ENCODE measurements at regions of chr7 and their contacts with region 1.

Region 1: GRCh38 chr7:112414855-112415490 is 35.3 kb upstream of the IFRD1 start:
- DNase-seq: peak in 1 of 2 donors; percentile 47
- ATAC-seq: no peak
- H3K4me3 ChIP-seq: no peak overlapping the region
- H3K4me3 Mint-ChIP-seq: no peak overlapping the region
- H3K27ac ChIP-seq: no peak overlapping the region
- H3K27ac Mint-ChIP-seq: no peak overlapping the region
- H3K4me1 ChIP-seq: no peaks in the 10 kb centered on the region
- H3K4me1 Mint-ChIP-seq: no peaks in the 10 kb centered on the region
- H3K27me3 ChIP-seq: no peaks in the 10 kb centered on the region
- H3K27me3 Mint-ChIP-seq: peaks cover 15 to 22% of the 10 kb centered on the region in 2 donors
- CTCF ChIP-seq: peak; percentile 21

Region 2: GRCh38 chr7:111763221-111763801 is 651.7 kb before region 1 on chr7:
- intact Hi-C with region 1: loop called (anchors 5 kb)
- DNase-seq: peak in 1 of 2 donors; percentile 9
- ATAC-seq: no peak
- H3K4me3 ChIP-seq: no peak overlapping the region
- H3K4me3 Mint-ChIP-seq: no peak overlapping the region
- H3K27ac ChIP-seq: no peak overlapping the region
- H3K27ac Mint-ChIP-seq: no peak overlapping the region
- H3K4me1 ChIP-seq: no peaks in the 10 kb centered on the region
- H3K4me1 Mint-ChIP-seq: no peaks in the 10 kb centered on the region
- H3K27me3 ChIP-seq: no peaks in the 10 kb centered on the region
- H3K27me3 Mint-ChIP-seq: no peaks in the 10 kb centered on the region
- CTCF ChIP-seq: no peak

Region 3: GRCh38 chr7:112476390-112477052 is 61.5 kb after region 1 on chr7:
- intact Hi-C with region 1: no loop called
- DNase-seq: no peak
- ATAC-seq: no peak
- H3K4me3 ChIP-seq: no peak overlapping the region
- H3K4me3 Mint-ChIP-seq: no peak overlapping the region
- H3K27ac ChIP-seq: no peak overlapping the region
- H3K27ac Mint-ChIP-seq: peak overlapping the region in 1 of 2 donors; percentile 54
- H3K4me1 ChIP-seq: no peaks in the 10 kb centered on the region
- H3K4me1 Mint-ChIP-seq: peaks cover 0 to 9% of the 10 kb centered on the region in 2 donors
- H3K27me3 ChIP-seq: no peaks in the 10 kb centered on the region
- H3K27me3 Mint-ChIP-seq: no peaks in the 10 kb centered on the region
- CTCF ChIP-seq: no peak

Region 4: DNA sequence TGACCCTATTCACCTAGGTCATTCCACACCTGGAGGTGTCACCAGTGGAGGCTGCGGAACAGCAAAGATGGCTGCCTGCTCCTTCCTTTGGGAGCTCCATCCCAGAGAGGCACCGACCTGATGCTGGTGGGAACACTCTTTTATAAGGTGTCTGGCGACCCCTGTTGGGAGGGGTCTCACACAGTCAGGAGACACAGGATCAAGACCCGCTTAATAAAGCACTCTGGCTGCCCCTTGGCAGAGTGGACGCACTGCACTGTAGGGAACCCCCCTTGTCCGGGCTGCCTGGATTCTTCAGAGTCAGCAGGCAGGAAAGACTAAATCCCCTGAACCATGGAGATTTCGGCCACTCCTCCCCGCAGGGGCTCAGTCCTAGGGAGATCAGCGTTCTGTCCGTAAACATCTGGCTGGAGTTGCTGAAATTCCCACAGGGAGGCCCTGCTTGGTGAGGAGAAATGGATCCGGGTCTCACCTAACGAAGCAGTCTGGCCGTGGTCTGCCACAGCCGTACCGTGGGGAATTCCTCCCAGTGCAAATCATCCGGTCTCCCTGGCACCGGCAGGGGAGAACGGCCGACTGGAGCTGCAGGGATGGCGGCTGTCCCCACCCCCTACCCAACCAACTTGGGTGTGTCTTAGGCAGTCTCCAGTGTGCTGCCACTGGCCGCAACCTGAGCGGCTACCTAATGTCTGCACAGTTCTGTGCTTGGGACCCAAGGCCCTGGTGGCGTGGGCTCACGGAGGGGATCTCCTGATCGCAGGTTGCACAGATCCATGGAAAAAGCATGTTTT is 131.9 kb after region 1 on chr7:
- intact Hi-C with region 1: no loop called
- DNase-seq: no peak
- ATAC-seq: peak in 1 of 3 donors; percentile 10
- H3K4me3 ChIP-seq: no peak overlapping the region
- H3K4me3 Mint-ChIP-seq: no peak overlapping the region
- H3K27ac ChIP-seq: no peak overlapping the region
- H3K27ac Mint-ChIP-seq: no peak overlapping the region
- H3K4me1 ChIP-seq: no peaks in the 10 kb centered on the region
- H3K4me1 Mint-ChIP-seq: no peaks in the 10 kb centered on the region
- H3K27me3 ChIP-seq: peaks cover 5% of the 10 kb centered on the region
- H3K27me3 Mint-ChIP-seq: peaks cover 0 to 2% of the 10 kb centered on the region in 2 donors
- CTCF ChIP-seq: no peak